Activated CD4-positive, alpha-beta memory T cell treated with anti-CD3 and anti-CD28 coated beads, Interleukin-2, amount 10 ng/mL, durations not matched to agents 7 days and 5 days (primary cell): ENCODE measurements at regions of chr20 and their contacts with region 1.

Region 1: GRCh38 chr20:45880988-45881788 is at the start of gene ZSWIM1:
- DNase-seq: peak; percentile 98
- H3K4me3 Mint-ChIP-seq: peak within 1 kb of the TSS; percentile 72
- H3K27ac Mint-ChIP-seq: peak within 1 kb of the TSS; percentile 34
- H3K4me1 Mint-ChIP-seq: peaks cover 40% of the 10 kb centered on the region
- H3K27me3 Mint-ChIP-seq: peaks cover 13% of the 10 kb centered on the region
- total RNA-seq, gene ZSWIM1: 2.7 to 2.9 TPM

Region 2: GRCh38 chr20:45857114-45857881 is 23.9 kb before region 1 on chr20 and contains the starts of genes ACOT8 and ZSWIM3:
- CTCF ChIA-PET with region 1: interaction called, 3 read pairs
- POLR2A ChIA-PET with region 1: interaction called, 29 read pairs
- DNase-seq: peak; percentile 96
- H3K4me3 Mint-ChIP-seq: peak within 1 kb of the TSS; percentile 98
- H3K27ac Mint-ChIP-seq: peak within 1 kb of the TSS; percentile 99
- H3K4me1 Mint-ChIP-seq: peaks cover 55% of the 10 kb centered on the region
- H3K27me3 Mint-ChIP-seq: no peaks in the 10 kb centered on the region
- total RNA-seq, gene ACOT8: 36.0 to 36.5 TPM
- total RNA-seq, gene ZSWIM3: 5.5 to 5.7 TPM

Region 3: DNA sequence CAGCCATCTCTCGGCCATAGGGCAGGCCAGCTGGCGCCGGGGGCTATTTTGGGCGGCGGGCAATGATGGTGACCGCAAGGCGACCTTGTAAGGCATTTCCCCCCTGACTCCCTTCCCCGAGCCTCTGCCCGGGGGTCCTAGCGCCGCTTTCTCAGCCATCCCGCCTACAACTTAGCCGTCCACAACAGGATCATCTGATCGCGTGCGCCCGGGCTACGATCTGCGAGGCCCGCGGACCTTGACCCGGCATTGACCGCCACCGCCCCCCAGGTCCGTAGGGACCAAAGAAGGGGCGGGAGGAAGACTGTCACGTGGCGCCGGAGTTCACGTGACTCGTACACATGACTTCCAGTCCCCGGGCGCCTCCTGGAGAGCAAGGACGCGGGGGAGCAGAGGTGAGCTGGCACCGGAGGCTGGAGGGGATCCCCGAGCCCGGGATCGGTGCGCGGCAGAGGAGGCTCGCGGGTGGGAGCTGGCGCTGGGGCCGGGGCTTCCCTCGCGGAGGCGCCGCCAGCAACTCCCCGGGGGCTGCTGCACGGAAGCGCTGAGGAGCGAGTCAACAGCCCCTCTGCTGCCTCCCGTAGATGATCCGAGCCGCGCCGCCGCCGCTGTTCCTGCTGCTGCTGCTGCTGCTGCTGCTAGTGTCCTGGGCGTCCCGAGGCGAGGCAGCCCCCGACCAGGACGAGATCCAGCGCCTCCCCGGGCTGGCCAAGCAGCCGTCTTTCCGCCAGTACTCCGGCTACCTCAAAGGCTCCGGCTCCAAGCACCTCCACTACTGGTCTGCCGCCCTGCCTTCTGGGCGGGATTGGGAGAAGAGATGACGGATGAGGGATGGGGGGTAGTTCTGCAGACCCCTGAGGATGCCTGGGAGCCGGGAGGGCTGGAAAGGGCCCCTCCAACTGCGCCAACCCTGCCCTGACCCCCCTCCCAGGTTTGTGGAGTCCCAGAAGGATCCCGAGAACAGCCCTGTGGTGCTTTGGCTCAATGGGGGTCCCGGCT is 10.1 kb after region 1 on chr20 and contains the starts of genes CTSA and NEURL2:
- CTCF ChIA-PET with region 1: interaction called, 10 read pairs
- POLR2A ChIA-PET with region 1: interaction called, 36 read pairs
- DNase-seq: peak; percentile 87
- H3K4me3 Mint-ChIP-seq: peak within 1 kb of the TSS; percentile 88
- H3K27ac Mint-ChIP-seq: peak within 1 kb of the TSS; percentile 40
- H3K4me1 Mint-ChIP-seq: peaks cover 36% of the 10 kb centered on the region
- H3K27me3 Mint-ChIP-seq: peaks cover 5% of the 10 kb centered on the region
- total RNA-seq, gene CTSA: 64.3 to 64.6 TPM
- total RNA-seq, gene NEURL2: 1.0 to 1.6 TPM